ENCODE measurements at regions of chr1 and their contacts with region 1.

Region 1: GRCh38 chr1:54190526-54190925 is 9.3 kb downstream of the CYB5RL start:
- DNase-seq: no peak
- ATAC-seq: no peak
- H3K4me3 ChIP-seq: no peak overlapping the region
- H3K27ac ChIP-seq: no peak overlapping the region
- H3K4me1 ChIP-seq: no peaks in the 10 kb centered on the region
- H3K27me3 ChIP-seq: no peaks in the 10 kb centered on the region
- CTCF ChIP-seq: no peak

Region 2: DNA sequence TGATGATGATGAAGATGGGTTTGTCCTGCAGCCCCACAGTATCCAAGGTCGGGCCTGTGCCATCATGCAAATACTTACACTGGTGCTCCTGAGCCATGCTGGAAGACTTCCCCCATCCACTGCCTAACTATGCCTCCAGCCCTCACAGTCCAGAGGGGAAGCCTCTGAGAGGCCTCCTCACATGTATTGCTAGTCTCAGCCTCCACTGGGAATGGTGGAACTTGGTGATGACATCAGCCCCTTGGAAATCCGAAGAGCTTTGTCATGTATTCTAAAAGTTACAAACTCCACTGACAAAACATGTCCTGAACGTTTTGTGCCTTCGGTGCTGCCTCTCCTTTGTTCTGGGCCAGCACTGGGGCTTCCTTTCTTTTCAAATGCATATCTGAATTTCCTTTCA is 792.4 kb before region 1 on chr1:
- intact Hi-C with region 1: no loop called
- DNase-seq: no peak
- ATAC-seq: no peak
- H3K4me3 ChIP-seq: no peak overlapping the region
- H3K27ac ChIP-seq: no peak overlapping the region
- H3K4me1 ChIP-seq: no peaks in the 10 kb centered on the region
- H3K27me3 ChIP-seq: peaks cover 0 to 25% (median 0%) of the 10 kb centered on the region in 3 donors
- CTCF ChIP-seq: no peak

Region 3: GRCh38 chr1:54137514-54138061 is 52.9 kb before region 1 on chr1:
- intact Hi-C with region 1: loop called in 1 of 2 experiments (anchors 5 kb)
- DNase-seq: no peak
- ATAC-seq: peak in 1 of 4 donors; percentile 41
- H3K4me3 ChIP-seq: no peak overlapping the region
- H3K27ac ChIP-seq: no peak overlapping the region
- H3K4me1 ChIP-seq: no peaks in the 10 kb centered on the region
- H3K27me3 ChIP-seq: no peaks in the 10 kb centered on the region
- CTCF ChIP-seq: no peak

Region 4: DNA sequence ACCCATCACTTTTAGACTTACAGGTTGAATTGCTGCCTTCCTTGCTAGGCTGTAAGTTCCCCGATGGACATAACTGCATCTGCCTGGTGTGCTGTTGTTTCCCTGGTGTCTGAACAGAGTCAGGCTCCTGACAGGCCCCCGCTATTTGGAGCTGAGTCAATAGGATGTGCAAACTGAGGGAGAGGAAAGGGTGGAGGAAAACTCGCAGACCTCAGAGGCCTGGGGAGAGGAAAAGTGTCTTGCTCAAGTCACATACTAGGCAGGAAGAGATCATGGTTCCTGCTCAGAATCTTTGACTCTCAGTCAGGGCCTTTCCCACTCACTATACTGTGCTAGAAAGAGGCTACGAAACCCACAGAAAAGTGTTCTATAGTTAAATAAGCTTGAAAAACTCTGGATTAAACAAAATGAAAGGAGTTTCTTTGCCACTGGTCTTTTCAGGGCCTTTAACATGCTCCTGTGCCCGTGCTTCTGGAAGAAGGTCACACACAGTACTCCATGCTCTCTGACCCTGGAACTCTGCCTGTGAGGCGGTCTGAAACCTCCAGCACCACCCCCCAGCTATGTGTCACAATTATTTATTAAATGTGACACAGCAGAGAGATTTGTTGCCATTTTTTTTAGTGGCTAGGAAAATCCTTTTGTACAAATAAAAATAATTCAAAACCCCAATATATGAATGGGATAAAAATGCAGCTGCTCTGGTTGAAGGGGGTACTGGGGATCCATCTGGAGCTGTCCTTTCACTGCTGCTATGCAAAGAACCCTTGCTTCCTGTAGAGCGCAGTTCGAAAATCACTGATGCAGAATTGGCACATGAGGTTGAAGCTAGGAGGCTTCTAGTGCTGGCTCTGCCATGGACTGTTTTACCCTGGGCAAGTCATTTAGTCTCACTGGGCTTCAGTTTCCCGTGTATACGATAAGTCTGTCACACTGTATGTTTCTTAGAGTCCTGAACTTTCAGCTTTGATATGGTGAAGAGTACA is 17.6 kb before region 1 on chr1:
- intact Hi-C with region 1: no loop called
- DNase-seq: no peak
- ATAC-seq: peak in 1 of 4 donors; percentile 67
- H3K4me3 ChIP-seq: no peak overlapping the region
- H3K27ac ChIP-seq: no peak overlapping the region
- H3K4me1 ChIP-seq: no peaks in the 10 kb centered on the region
- H3K27me3 ChIP-seq: no peaks in the 10 kb centered on the region
- CTCF ChIP-seq: no peak

Region 5: GRCh38 chr1:54287176-54287650 is 96.7 kb after region 1 on chr1:
- intact Hi-C with region 1: no loop called
- DNase-seq: peak; percentile 79 to 91
- ATAC-seq: peak; percentile 87 to 92 (median 87)
- H3K4me3 ChIP-seq: peak overlapping the region; percentile 37
- H3K27ac ChIP-seq: peak overlapping the region; percentile 90
- H3K4me1 ChIP-seq: peaks cover 75% of the 10 kb centered on the region
- H3K27me3 ChIP-seq: no peaks in the 10 kb centered on the region
- CTCF ChIP-seq: no peak

Region 6: GRCh38 chr1:54331091-54331772 is 140.7 kb after region 1 on chr1:
- intact Hi-C with region 1: no loop called
- DNase-seq: no peak
- ATAC-seq: no peak
- H3K4me3 ChIP-seq: no peak overlapping the region
- H3K27ac ChIP-seq: peak overlapping the region; percentile 93
- H3K4me1 ChIP-seq: peaks cover 98% of the 10 kb centered on the region
- H3K27me3 ChIP-seq: no peaks in the 10 kb centered on the region
- CTCF ChIP-seq: no peak